Motor neuron (in vitro differentiated cells): ENCODE measurements at regions of chr13 and their contacts with region 1.

Region 1: DNA sequence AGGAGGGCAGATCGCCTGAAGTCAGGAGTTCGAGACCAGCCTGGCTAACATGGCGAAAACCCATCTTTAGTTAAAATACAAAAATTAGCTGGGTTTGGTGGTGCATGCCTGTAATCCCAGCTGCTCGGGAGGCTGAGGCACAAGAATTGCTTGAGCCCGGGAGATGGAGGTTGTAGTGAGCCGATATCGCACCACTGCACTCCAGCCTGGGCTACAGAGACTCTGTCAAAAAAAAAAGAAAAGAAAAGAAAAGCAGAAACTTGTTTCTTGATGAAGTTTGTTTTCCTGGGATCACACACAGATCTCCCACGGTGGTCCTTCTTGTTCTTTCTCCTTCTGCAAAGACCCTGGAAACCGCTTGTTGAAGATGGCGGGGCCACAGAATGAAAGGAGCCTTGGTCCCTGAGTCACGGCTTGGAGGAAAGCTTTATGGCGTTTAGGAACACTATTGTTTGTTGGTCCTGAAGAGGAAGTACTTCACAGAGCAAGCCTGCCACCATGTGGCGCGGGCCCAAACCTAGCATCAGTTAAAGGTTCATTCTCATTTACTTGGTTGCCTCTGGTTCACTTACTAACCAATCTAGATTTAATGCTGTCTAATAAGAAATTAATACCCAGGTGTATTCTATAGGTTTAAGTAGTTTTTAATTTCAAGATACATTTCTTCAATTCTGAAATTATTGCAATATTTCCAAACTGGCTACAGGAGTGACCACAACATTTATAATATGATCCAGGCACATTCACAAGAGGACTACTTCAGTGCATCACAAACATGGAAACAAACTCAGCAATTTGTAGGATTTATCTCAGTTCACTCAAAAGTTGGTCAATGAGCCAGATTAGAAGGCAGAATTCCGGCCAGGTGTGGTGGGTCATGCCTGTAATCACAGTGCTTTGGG is 21.3 kb upstream of the ARL11 start:
- ATAC-seq: peak; percentile 94 to 100 (median 99)
- H3K4me3 ChIP-seq: peak overlapping the region in 1 of 5 donors; percentile 17
- H3K27ac ChIP-seq: no peak overlapping the region
- H3K4me1 ChIP-seq: no peaks in the 10 kb centered on the region

Region 2: DNA sequence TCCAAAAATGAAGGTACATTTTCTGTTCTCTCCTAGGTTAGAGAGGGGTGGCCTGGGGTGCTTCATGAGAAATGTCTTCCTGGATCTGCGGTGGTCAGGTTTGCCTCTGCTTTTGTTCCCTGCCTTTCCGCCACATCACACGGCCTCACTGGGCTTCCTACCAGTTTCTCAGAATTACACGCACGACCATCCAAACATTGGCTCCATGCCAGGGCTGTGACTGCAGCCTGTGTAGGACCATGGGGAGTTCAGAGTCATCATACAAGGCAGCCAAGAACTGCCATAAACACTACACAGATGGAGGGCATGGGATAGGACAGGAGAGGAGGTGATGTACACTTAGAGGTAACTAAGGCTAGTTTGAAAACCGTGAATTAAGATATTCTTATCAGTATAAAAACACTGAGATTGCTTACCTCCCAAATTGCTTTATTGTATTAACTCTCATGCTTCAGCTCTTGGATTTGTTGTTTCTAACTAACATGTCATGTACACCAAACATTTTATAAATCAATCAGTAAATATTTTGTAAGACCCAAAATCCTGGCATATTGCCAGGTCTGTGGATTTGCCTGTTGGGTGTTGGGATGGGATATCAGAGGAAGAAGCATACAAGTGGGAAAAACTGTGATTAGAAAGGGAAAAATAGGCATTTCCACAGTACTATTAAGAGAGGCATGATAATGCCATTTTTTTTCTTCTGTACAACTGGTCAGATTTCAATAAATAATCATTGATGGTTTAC is 314.1 kb before region 1 on chr13:
- in situ Hi-C with region 1: loop called in 1 of 9 experiments (anchors 25 kb)
- ATAC-seq: peak in 5 of 8 experiments; percentile 37 to 98 (median 88)
- H3K4me3 ChIP-seq: no peak overlapping the region
- H3K27ac ChIP-seq: no peak overlapping the region
- H3K4me1 ChIP-seq: no peaks in the 10 kb centered on the region

Region 3: GRCh38 chr13:49300739-49301589 is 306.0 kb before region 1 on chr13:
- in situ Hi-C with region 1: loop called in 7 of 9 experiments (anchors 10 to 25 kb)
- ATAC-seq: peak; percentile 83 to 94 (median 86)
- H3K4me3 ChIP-seq: no peak overlapping the region
- H3K27ac ChIP-seq: no peak overlapping the region
- H3K4me1 ChIP-seq: peaks cover 0 to 11% of the 10 kb centered on the region in 2 donors